ENCODE measurements at regions of chr12 and their contacts with region 1.

Region 1: GRCh38 chr12:99232324-99232723 is 415.2 kb upstream of the GARIN6 start:
- DNase-seq: no peak
- ATAC-seq: no peak
- H3K4me3 ChIP-seq: no peak overlapping the region
- H3K27ac ChIP-seq: no peak overlapping the region
- H3K4me1 ChIP-seq: no peaks in the 10 kb centered on the region
- H3K27me3 ChIP-seq: no peaks in the 10 kb centered on the region
- CTCF ChIP-seq: no peak
- POLR2A ChIP-seq: no peak
- RAD21 ChIP-seq: no peak

Region 2: GRCh38 chr12:97862072-97862471 is 1370.3 kb before region 1 on chr12:
- CTCF ChIA-PET with region 1: no interaction called
- POLR2A ChIA-PET with region 1: no interaction called
- dilution Hi-C with region 1: no loop called
- in situ Hi-C with region 1: no loop called
- intact Hi-C with region 1: loop called (anchors 10 kb)
- DNase-seq: no peak
- ATAC-seq: no peak
- H3K4me3 ChIP-seq: no peak overlapping the region
- H3K27ac ChIP-seq: no peak overlapping the region
- H3K4me1 ChIP-seq: no peaks in the 10 kb centered on the region
- H3K27me3 ChIP-seq: no peaks in the 10 kb centered on the region
- CTCF ChIP-seq: no peak
- POLR2A ChIP-seq: no peak
- RAD21 ChIP-seq: no peak

Region 3: GRCh38 chr12:99200711-99201384 is 31.5 kb before region 1 on chr12:
- CTCF ChIA-PET with region 1: no interaction called
- POLR2A ChIA-PET with region 1: no interaction called
- dilution Hi-C with region 1: no loop called
- in situ Hi-C with region 1: no loop called
- intact Hi-C with region 1: no loop called
- DNase-seq: no peak
- ATAC-seq: no peak
- H3K4me3 ChIP-seq: no peak overlapping the region
- H3K27ac ChIP-seq: no peak overlapping the region
- H3K4me1 ChIP-seq: no peaks in the 10 kb centered on the region
- H3K27me3 ChIP-seq: no peaks in the 10 kb centered on the region
- CTCF ChIP-seq: no peak
- POLR2A ChIP-seq: no peak
- RAD21 ChIP-seq: no peak

Region 4: GRCh38 chr12:99281277-99281676 is 49.0 kb after region 1 on chr12:
- CTCF ChIA-PET with region 1: no interaction called
- POLR2A ChIA-PET with region 1: no interaction called
- dilution Hi-C with region 1: no loop called
- in situ Hi-C with region 1: no loop called
- intact Hi-C with region 1: no loop called
- DNase-seq: no peak
- ATAC-seq: no peak
- H3K4me3 ChIP-seq: no peak overlapping the region
- H3K27ac ChIP-seq: no peak overlapping the region
- H3K4me1 ChIP-seq: no peaks in the 10 kb centered on the region
- H3K27me3 ChIP-seq: no peaks in the 10 kb centered on the region
- CTCF ChIP-seq: no peak
- POLR2A ChIP-seq: no peak
- RAD21 ChIP-seq: no peak